Endothelial cell of umbilical vein (primary cell): ENCODE measurements at regions of chr6 and their contacts with region 1.

Region 1: DNA sequence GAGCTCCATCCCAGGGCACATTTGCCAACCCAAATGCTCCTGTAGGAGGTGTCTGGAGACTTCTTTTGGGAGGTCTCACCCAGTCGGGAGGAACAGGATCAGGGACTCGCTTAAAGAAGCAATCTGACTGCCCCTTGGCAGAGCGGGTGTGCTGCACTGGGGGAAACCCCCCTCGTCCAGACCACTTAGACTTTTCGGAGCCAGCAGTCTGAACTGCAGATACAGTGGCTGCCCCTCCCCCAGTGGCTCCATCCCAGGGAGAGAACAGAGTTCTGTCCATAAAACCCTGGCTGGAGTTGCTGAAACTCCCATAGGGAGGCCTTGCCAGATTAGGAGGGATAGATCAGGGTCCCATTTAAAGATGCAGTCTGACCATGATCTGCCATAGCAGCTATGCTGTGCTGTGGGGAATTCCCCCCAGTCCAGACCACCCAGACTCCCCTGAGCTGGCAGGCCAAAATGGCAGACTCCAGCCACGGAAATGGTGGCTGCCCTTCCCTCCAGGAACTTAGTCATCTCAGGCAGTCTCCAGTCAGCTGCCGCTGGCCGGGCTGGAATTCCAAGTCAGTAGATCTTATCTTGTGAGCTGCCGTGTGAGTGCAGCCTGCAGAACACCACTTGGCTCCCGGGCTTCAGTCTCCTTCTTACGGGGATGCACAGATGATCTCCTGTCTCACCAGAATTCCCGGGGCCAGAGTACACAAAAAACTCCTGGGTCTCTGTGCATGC is 278.1 kb upstream of the SASH1 start:
- DNase-seq: peak; percentile 90
- H3K4me3 ChIP-seq: no peak overlapping the region
- H3K27ac ChIP-seq: peak overlapping the region; percentile 96
- H3K4me1 ChIP-seq: peaks cover 32% of the 10 kb centered on the region
- H3K27me3 ChIP-seq: no peaks in the 10 kb centered on the region
- CTCF ChIP-seq: no peak
- POLR2A ChIP-seq: no peak

Region 2: DNA sequence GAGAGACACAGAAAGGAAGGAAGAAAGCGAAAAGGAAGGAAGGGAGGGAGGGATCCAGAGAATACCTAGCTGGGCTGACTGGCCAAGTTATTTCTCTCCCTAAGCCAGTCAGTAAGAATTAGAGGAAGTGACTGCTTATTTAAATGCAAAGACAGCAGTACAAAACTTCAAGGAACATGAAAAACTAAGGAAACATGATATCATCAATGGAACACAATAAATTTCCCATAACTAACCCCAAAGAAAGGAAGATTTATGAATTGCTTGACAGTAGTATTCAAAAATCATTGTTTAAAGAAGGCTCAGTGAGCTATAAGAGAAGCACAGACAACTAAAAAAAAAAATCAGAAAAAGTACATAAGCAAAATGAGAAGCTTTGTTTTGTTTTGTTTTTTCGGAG is 25.8 kb after region 1 on chr6:
- CTCF ChIA-PET with region 1: no interaction called
- POLR2A ChIA-PET with region 1: no interaction called
- dilution Hi-C with region 1: no loop called
- intact Hi-C with region 1: loop called (anchors 2 kb)
- DNase-seq: peak; percentile 85
- H3K4me3 ChIP-seq: no peak overlapping the region
- H3K27ac ChIP-seq: peak overlapping the region; percentile 55
- H3K4me1 ChIP-seq: peaks cover 13% of the 10 kb centered on the region
- H3K27me3 ChIP-seq: no peaks in the 10 kb centered on the region
- CTCF ChIP-seq: no peak
- POLR2A ChIP-seq: no peak

Region 3: DNA sequence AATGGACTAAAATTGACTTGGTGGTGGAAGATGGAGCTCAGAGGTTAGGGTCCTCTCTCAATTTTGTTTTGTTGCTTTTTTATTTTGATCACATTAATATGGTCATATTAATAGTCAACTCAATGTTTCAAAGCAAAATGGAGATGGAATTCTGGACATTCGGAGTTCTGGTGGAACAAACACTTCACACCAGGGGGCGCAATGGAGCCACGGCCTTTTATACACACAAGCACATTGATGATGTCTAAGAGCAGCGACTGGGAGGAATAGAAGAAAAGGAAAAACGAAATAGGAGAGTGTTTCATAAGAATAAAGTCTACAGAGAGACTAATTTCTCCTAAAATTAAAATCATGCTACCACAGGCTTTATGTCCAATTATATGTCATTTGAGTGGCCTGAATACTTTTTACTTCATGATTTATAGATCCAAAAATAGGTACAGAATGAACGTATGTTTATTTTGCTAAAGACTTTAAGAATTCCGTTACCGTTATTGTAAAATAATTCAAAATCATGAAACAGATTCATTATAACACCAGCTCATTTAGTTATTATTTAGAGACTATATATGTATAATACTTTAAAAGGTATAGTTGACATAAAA is 80.4 kb after region 1 on chr6:
- CTCF ChIA-PET with region 1: no interaction called
- POLR2A ChIA-PET with region 1: no interaction called
- dilution Hi-C with region 1: no loop called
- intact Hi-C with region 1: loop called (anchors 2 kb)
- DNase-seq: peak; percentile 74
- H3K4me3 ChIP-seq: no peak overlapping the region
- H3K27ac ChIP-seq: peak overlapping the region; percentile 99
- H3K4me1 ChIP-seq: peaks cover 41% of the 10 kb centered on the region
- H3K27me3 ChIP-seq: no peaks in the 10 kb centered on the region
- CTCF ChIP-seq: peak; percentile 75 to 81
- POLR2A ChIP-seq: no peak